Activated CD8-positive, alpha-beta T cell treated with anti-CD3 and anti-CD28 coated beads, Interleukin-2, amount 10 ng/mL, durations not matched to agents 7 days and 5 days (primary cell): ENCODE measurements at regions of chrX and their contacts with region 1.

Region 1: GRCh38 chrX:22135994-22136684 is 104.0 kb downstream of the PHEX start:
- DNase-seq: peak; percentile 44
- ATAC-seq: no peak
- H3K4me3 Mint-ChIP-seq: no peak overlapping the region
- H3K27ac Mint-ChIP-seq: no peak overlapping the region
- H3K4me1 Mint-ChIP-seq: no peaks in the 10 kb centered on the region
- H3K27me3 Mint-ChIP-seq: no peaks in the 10 kb centered on the region

Region 2: GRCh38 chrX:22073918-22074317 is 62.2 kb before region 1 on chrX:
- CTCF ChIA-PET with region 1: no interaction called
- POLR2A ChIA-PET with region 1: no interaction called
- DNase-seq: no peak
- ATAC-seq: no peak
- H3K4me3 Mint-ChIP-seq: no peak overlapping the region
- H3K27ac Mint-ChIP-seq: no peak overlapping the region
- H3K4me1 Mint-ChIP-seq: no peaks in the 10 kb centered on the region
- H3K27me3 Mint-ChIP-seq: no peaks in the 10 kb centered on the region

Region 3: DNA sequence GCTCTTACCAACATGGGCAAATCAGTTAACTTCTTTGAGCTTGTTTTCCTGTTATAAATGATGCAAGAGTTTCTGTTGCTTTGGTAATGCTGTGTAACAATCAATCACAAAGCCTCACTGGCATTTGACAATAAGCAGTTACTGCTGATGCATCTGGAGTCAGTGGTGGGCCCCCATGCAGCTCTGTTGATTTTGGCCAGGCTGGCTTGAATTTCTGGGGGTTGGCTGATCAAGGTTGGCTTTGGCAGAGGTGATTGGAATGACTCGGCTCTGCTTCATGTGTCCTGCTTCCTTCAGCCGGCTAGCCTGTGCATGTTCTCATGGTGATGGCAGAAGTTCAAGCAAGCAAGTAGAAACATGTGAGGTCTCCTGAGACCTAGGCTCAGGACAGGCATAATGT is 13.6 kb before region 1 on chrX:
- CTCF ChIA-PET with region 1: interaction called, 13 read pairs
- POLR2A ChIA-PET with region 1: no interaction called
- DNase-seq: no peak
- ATAC-seq: no peak
- H3K4me3 Mint-ChIP-seq: no peak overlapping the region
- H3K27ac Mint-ChIP-seq: no peak overlapping the region
- H3K4me1 Mint-ChIP-seq: no peaks in the 10 kb centered on the region
- H3K27me3 Mint-ChIP-seq: no peaks in the 10 kb centered on the region

Region 4: DNA sequence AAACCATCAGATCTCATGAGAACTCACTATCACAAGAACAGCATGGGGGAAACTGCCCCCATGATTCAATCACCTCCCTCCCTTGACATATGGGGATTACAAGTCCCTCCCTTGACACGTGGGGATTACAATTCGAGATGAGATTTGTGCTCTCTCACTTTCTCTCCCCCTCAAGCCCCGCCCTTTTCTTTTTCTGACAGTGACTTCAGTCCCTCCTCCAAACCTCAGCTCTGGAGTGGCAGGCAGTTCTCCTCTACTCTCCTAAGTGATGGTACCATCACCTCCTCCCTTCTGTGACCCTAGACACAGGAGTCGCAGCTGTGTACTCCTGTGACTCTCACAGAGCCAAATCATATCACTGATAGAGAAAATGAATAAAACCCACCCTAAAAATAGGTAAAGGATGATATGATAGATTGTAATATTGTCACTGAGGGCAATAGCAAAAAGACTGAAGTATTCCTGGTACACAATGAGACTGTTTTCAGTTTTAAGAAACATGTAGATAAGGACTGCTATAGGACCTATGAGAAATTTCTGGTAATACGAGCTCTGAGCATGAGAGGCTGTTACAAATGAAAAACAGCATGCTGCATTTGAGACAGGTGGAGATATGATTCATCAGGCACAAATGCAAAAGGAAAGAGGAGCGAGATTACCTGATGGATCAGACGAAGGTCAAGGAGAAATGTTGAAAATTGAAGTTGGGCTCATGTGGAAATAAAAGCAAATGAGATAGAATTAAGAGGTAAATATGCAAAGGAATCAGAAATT is 35.3 kb after region 1 on chrX:
- CTCF ChIA-PET with region 1: no interaction called
- POLR2A ChIA-PET with region 1: no interaction called
- DNase-seq: no peak
- ATAC-seq: no peak
- H3K4me3 Mint-ChIP-seq: no peak overlapping the region
- H3K27ac Mint-ChIP-seq: no peak overlapping the region
- H3K4me1 Mint-ChIP-seq: no peaks in the 10 kb centered on the region
- H3K27me3 Mint-ChIP-seq: no peaks in the 10 kb centered on the region

Region 5: GRCh38 chrX:22748093-22748999 is 612.2 kb after region 1 on chrX:
- CTCF ChIA-PET with region 1: interaction called, 16 read pairs
- POLR2A ChIA-PET with region 1: no interaction called
- DNase-seq: peak; percentile 41
- ATAC-seq: no peak
- H3K4me3 Mint-ChIP-seq: no peak overlapping the region
- H3K27ac Mint-ChIP-seq: no peak overlapping the region
- H3K4me1 Mint-ChIP-seq: no peaks in the 10 kb centered on the region
- H3K27me3 Mint-ChIP-seq: no peaks in the 10 kb centered on the region